GM13976 (cell line): ENCODE measurements at regions of chr18 and their contacts with region 1.

Region 1: DNA sequence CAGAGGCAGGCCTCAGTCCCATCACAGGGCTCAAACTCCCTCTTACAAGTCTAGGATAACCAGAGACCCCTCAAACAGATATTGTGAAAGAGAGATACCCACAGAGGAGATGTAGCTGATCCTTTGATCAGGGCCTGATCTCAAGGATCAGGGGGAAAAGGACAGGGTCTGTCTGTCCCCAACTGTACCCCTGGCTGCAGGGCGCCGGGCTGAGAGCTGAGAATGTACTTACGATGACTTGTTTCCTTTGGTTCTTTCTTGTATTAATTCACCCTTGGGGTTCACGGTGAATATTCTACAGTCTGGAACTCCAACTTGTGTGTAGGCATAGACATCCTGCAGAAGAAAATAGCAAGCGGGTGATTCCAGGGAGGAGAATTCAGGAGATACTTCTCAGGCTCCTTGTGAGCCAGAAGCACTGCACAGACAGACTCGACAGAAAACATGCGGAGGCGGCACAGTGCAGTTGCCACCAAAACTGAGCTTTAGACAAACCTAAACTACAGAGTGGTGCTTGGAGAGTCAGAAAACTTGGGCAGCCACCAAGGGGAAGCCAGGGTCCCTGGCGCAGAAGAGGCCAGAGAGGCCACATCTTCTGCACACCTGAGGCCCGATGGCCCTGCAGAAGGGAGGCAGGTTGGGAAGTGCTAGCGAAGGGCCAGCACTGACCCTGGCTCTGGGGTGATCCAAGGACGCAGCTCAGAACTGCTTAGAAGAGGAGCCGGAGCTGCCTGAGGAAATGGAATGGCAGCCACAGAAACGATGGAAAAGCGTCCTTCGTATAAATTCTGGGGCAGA is 73.9 kb downstream of the EMILIN2 start:
- DNase-seq: no peak
- CTCF ChIP-seq: no peak

Region 2: DNA sequence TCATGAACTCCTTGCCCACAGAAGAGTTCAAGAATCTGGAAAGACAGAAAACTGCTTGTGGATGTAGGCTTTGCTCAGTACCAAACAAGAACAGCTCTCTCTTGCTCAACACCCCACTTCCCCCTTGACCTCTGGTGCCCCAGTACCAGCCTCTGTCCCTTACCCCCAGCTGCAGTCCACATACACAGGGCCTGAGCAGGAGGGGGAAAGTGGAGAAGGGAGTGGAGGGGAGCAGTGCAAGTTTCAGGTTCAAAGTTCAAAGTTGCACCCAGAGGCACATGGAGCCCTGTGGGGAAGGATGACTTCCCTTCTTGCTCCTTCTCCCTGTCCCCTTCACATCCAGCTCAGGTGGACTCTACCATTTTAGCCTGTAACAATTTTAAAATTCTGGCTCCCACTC is 153.3 kb after region 1 on chr18:
- in situ Hi-C with region 1: loop called (anchors 10 kb)
- DNase-seq: no peak
- CTCF ChIP-seq: no peak

Region 3: DNA sequence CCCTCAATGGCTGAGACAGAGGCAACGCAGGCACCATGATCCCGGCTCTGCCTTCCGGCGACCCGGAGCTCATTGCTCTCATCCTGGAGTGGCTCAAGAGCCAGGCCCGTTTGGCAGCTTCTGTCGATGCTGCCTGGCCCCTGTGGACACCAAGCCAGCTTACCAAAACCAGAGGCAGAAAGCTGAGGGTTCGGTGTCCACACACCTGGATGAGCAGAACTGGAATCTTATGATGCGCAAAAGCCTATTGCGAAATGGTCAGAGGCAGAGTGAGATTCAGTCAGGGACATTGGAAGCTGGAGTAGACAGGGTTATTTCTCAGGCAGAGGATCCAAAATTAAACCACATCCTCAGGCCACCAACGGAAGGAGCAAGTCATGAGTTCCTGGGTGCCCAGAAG is 494.4 kb after region 1 on chr18:
- in situ Hi-C with region 1: no loop called
- DNase-seq: no peak
- CTCF ChIP-seq: no peak